Endothelial cell of umbilical vein (primary cell): ENCODE measurements at regions of chr5 and their contacts with region 1.

Region 1: DNA sequence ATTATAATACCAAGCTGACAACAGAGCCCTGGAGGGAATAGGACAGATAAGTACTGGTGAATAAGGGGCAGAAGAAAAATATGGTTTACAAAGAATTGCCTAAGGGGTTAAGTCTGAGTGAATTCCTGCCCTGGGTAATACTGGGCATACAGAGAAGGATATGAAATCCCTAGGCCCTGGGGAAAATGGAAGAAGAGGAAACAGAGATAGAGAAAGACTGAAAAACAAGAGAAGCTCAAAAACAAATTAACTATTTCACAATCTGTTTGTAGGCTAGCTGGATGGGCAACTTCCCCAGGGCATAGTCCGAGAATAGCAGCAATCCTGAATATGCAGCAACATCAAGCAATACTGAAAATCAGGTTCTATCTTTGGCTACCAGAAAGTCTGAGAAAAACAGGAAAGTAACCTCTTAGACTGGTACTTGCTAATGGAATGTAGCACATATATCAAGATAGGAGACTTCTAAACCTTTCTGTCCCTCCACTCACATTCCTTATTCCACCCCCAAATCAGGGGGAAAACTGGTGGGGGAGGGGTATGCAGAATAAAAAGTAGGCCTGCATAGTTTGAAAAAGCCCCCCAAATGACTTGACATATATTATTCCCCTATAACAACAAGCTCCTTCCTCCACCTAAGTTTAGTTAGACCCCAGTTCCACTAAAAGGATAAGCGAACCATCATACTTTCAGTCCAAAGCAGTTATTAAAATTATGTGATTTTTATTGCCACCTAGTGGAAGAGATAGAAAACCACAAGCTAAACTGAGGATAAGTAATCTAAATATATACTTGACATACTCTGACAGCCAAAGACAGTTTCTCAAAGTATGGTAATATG is 20.6 kb downstream of the SLC38A9 start:
- DNase-seq: peak; percentile 57
- H3K4me3 ChIP-seq: no peak overlapping the region
- H3K27ac ChIP-seq: no peak overlapping the region
- H3K4me1 ChIP-seq: no peaks in the 10 kb centered on the region
- H3K27me3 ChIP-seq: no peaks in the 10 kb centered on the region
- CTCF ChIP-seq: peak; percentile 29 to 32
- POLR2A ChIP-seq: no peak

Region 2: GRCh38 chr5:54446379-54446732 is 1245.1 kb before region 1 on chr5:
- CTCF ChIA-PET with region 1: no interaction called
- POLR2A ChIA-PET with region 1: no interaction called
- dilution Hi-C with region 1: no loop called
- intact Hi-C with region 1: no loop called
- DNase-seq: no peak
- H3K4me3 ChIP-seq: no peak overlapping the region
- H3K27ac ChIP-seq: no peak overlapping the region
- H3K4me1 ChIP-seq: no peaks in the 10 kb centered on the region
- H3K27me3 ChIP-seq: peaks cover 8 to 10% of the 10 kb centered on the region in 2 experiments
- CTCF ChIP-seq: no peak
- POLR2A ChIP-seq: no peak

Region 3: GRCh38 chr5:55226027-55226933 is 465.2 kb before region 1 on chr5:
- CTCF ChIA-PET with region 1: no interaction called
- POLR2A ChIA-PET with region 1: no interaction called
- dilution Hi-C with region 1: no loop called
- intact Hi-C with region 1: loop called (anchors 5 kb)
- DNase-seq: peak; percentile 51
- H3K4me3 ChIP-seq: peak overlapping the region in 1 of 3 experiments; percentile 25
- H3K27ac ChIP-seq: no peak overlapping the region
- H3K4me1 ChIP-seq: peaks cover 8% of the 10 kb centered on the region
- H3K27me3 ChIP-seq: peaks cover 84 to 95% of the 10 kb centered on the region in 2 experiments
- CTCF ChIP-seq: peak; percentile 75 to 77
- POLR2A ChIP-seq: no peak

Region 4: DNA sequence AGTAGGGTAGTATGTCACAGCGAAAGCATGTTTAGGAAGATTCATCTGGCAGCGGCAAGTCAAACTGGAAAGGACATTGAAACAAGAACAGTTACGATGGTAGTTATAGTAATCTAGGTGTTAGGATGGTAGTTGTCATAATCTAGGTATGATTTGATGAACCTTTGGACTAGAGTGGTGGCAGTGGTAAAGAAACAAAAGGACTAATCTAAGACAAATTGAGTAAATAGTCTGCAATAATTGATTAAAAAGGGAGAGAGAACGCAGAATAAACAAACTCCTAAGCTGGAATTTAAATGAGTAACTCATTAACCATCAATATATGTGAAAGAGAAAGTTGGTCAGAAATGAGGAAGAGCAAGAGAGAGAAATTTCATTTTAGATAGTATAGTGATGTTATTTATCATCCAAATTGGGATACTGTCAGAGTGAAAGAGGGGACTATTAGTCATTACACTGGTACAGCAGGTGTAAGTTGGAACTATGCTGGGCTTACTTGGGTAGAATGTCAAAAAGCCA is 326.9 kb before region 1 on chr5:
- CTCF ChIA-PET with region 1: interaction called, 14 read pairs
- POLR2A ChIA-PET with region 1: no interaction called
- dilution Hi-C with region 1: no loop called
- intact Hi-C with region 1: no loop called
- DNase-seq: no peak
- H3K4me3 ChIP-seq: no peak overlapping the region
- H3K27ac ChIP-seq: no peak overlapping the region
- H3K4me1 ChIP-seq: no peaks in the 10 kb centered on the region
- H3K27me3 ChIP-seq: no peaks in the 10 kb centered on the region
- CTCF ChIP-seq: no peak
- POLR2A ChIP-seq: no peak

Region 5: DNA sequence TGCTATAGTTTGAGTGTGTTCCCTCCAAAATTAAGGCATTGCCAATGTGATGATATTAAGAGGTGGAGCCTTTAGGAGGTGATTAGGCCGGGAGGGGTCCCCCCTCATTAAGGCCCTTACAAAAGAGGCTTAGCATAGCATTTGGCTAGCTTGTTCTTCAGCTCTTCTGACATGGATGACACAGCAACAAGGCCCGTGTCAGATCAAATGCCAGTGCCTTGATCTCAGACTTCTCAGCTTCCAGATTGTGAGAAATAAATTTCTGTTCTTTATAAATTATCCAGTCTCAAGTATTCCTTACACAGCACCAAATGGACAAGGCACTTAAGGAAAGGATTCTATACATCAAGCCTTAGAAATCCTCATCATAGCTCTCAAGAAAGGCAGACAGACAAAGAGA is 11.1 kb before region 1 on chr5:
- CTCF ChIA-PET with region 1: interaction called, 27 read pairs
- POLR2A ChIA-PET with region 1: no interaction called
- dilution Hi-C with region 1: no loop called
- intact Hi-C with region 1: no loop called
- DNase-seq: no peak
- H3K4me3 ChIP-seq: no peak overlapping the region
- H3K27ac ChIP-seq: no peak overlapping the region
- H3K4me1 ChIP-seq: no peaks in the 10 kb centered on the region
- H3K27me3 ChIP-seq: no peaks in the 10 kb centered on the region
- CTCF ChIP-seq: no peak
- POLR2A ChIP-seq: no peak

Region 6: GRCh38 chr5:55923177-55923771 is 231.8 kb after region 1 on chr5:
- CTCF ChIA-PET with region 1: interaction called, 4 read pairs
- POLR2A ChIA-PET with region 1: no interaction called
- dilution Hi-C with region 1: no loop called
- intact Hi-C with region 1: loop called (anchors 2 kb)
- DNase-seq: peak; percentile 87
- H3K4me3 ChIP-seq: peak overlapping the region in 2 of 3 experiments; percentile 10 to 26
- H3K27ac ChIP-seq: peak overlapping the region; percentile 89
- H3K4me1 ChIP-seq: peaks cover 38% of the 10 kb centered on the region
- H3K27me3 ChIP-seq: no peaks in the 10 kb centered on the region
- CTCF ChIP-seq: no peak
- POLR2A ChIP-seq: peak; percentile 81